ENCODE measurements at regions of chr4 and their contacts with region 1.

Region 1: GRCh38 chr4:76758290-76758882 is 139.6 kb downstream of the SOWAHB start:
- DNase-seq: peak; percentile 80
- H3K4me3 Mint-ChIP-seq: no peak overlapping the region
- H3K27ac Mint-ChIP-seq: no peak overlapping the region
- H3K4me1 Mint-ChIP-seq: peaks cover 8% of the 10 kb centered on the region
- H3K27me3 Mint-ChIP-seq: no peaks in the 10 kb centered on the region
- CTCF ChIP-seq: peak; percentile 52

Region 2: GRCh38 chr4:77044461-77045150 is 286.2 kb after region 1 on chr4:
- CTCF ChIA-PET with region 1: interaction called, 6 read pairs
- POLR2A ChIA-PET with region 1: interaction called, 3 read pairs
- intact Hi-C with region 1: loop called (anchors 10 kb)
- DNase-seq: peak; percentile 47
- H3K4me3 Mint-ChIP-seq: peak overlapping the region; percentile 30
- H3K27ac Mint-ChIP-seq: peak overlapping the region; percentile 82
- H3K4me1 Mint-ChIP-seq: peaks cover 20% of the 10 kb centered on the region
- H3K27me3 Mint-ChIP-seq: no peaks in the 10 kb centered on the region
- CTCF ChIP-seq: peak; percentile 44

Measured in MCF 10A (cell line).